HepG2 (cell line): ENCODE measurements at regions of chr14 and their contacts with region 1.

Region 1: GRCh38 chr14:22929104-22929847 is at the start of gene PRMT5:
- DNase-seq: peak; percentile 100
- ATAC-seq: peak; percentile 98
- H3K4me3 ChIP-seq: peak within 1 kb of the TSS; percentile 77 to 98 (median 92)
- H3K27ac ChIP-seq: peak within 1 kb of the TSS; percentile 78
- H3K4me1 ChIP-seq: peaks cover 27% of the 10 kb centered on the region
- H3K27me3 ChIP-seq: no peaks in the 10 kb centered on the region; a peak in 1 of 5 replicates
- CTCF ChIP-seq: peak; percentile 60
- EP300 ChIP-seq: peak; percentile 56 to 82; a peak in 3 of 4 replicates
- POLR2A ChIP-seq: peak; percentile 96 to 98
- RAD21 ChIP-seq: peak; percentile 74
- total RNA-seq, gene PRMT5: 210 and 289 TPM in 2 replicates

Region 2: GRCh38 chr14:22791301-22791700 is 138.0 kb before region 1 on chr14:
- CTCF ChIA-PET with region 1: no interaction called
- POLR2A ChIA-PET with region 1: no interaction called
- in situ Hi-C with region 1: no loop called
- intact Hi-C with region 1: no loop called
- DNase-seq: no peak
- ATAC-seq: peak; percentile 11; the same call in 1 of the 3 replicates
- H3K4me3 ChIP-seq: no peak overlapping the region
- H3K27ac ChIP-seq: no peak overlapping the region
- H3K4me1 ChIP-seq: peaks cover 17% of the 10 kb centered on the region
- H3K27me3 ChIP-seq: no peaks in the 10 kb centered on the region; a peak in 1 of 5 replicates
- CTCF ChIP-seq: no peak
- EP300 ChIP-seq: no peak
- POLR2A ChIP-seq: no peak
- RAD21 ChIP-seq: no peak

Region 3: GRCh38 chr14:22813145-22813544 is 116.1 kb before region 1 on chr14:
- CTCF ChIA-PET with region 1: no interaction called
- POLR2A ChIA-PET with region 1: no interaction called
- in situ Hi-C with region 1: no loop called
- intact Hi-C with region 1: no loop called
- DNase-seq: no peak
- ATAC-seq: peak; percentile 8; the same call in 1 of the 3 replicates
- H3K4me3 ChIP-seq: no peak overlapping the region
- H3K27ac ChIP-seq: no peak overlapping the region
- H3K4me1 ChIP-seq: peaks cover 32% of the 10 kb centered on the region
- H3K27me3 ChIP-seq: no peaks in the 10 kb centered on the region; a peak in 1 of 5 replicates
- CTCF ChIP-seq: no peak
- EP300 ChIP-seq: no peak
- POLR2A ChIP-seq: no peak
- RAD21 ChIP-seq: no peak

Region 4: GRCh38 chr14:22882529-22883172 is 46.6 kb before region 1 on chr14:
- CTCF ChIA-PET with region 1: no interaction called
- POLR2A ChIA-PET with region 1: interaction called, 13 read pairs
- in situ Hi-C with region 1: no loop called
- intact Hi-C with region 1: no loop called
- DNase-seq: no peak
- ATAC-seq: peak; percentile 20
- H3K4me3 ChIP-seq: no peak overlapping the region
- H3K27ac ChIP-seq: no peak overlapping the region
- H3K4me1 ChIP-seq: peaks cover 27% of the 10 kb centered on the region
- H3K27me3 ChIP-seq: peaks cover 8 to 54% of the 10 kb centered on the region in 2 experiments; a peak in 4 of 5 replicates
- CTCF ChIP-seq: no peak
- EP300 ChIP-seq: no peak
- POLR2A ChIP-seq: no peak; a peak in 1 of 4 replicates
- RAD21 ChIP-seq: no peak

Region 5: GRCh38 chr14:22918804-22919600 is 10.3 kb before region 1 on chr14 and contains the start of gene RBM23:
- CTCF ChIA-PET with region 1: interaction called, 3 read pairs
- POLR2A ChIA-PET with region 1: interaction called, 42 read pairs
- in situ Hi-C with region 1: no loop called
- intact Hi-C with region 1: no loop called
- DNase-seq: peak; percentile 36
- ATAC-seq: no peak
- H3K4me3 ChIP-seq: no peak within 1 kb of the TSS
- H3K27ac ChIP-seq: no peak within 1 kb of the TSS
- H3K4me1 ChIP-seq: peaks cover 33% of the 10 kb centered on the region
- H3K27me3 ChIP-seq: no peaks in the 10 kb centered on the region
- CTCF ChIP-seq: no peak
- EP300 ChIP-seq: no peak
- POLR2A ChIP-seq: no peak
- RAD21 ChIP-seq: no peak
- total RNA-seq, gene RBM23: 0.52 and 1.5 TPM in 2 replicates

Region 6: GRCh38 chr14:22945642-22946041 is 16.4 kb after region 1 on chr14:
- CTCF ChIA-PET with region 1: interaction called, 3 read pairs
- POLR2A ChIA-PET with region 1: interaction called, 21 read pairs
- in situ Hi-C with region 1: no loop called
- intact Hi-C with region 1: loop called (anchors 1 kb)
- DNase-seq: no peak
- ATAC-seq: no peak
- H3K4me3 ChIP-seq: no peak overlapping the region
- H3K27ac ChIP-seq: no peak overlapping the region
- H3K4me1 ChIP-seq: no peaks in the 10 kb centered on the region
- H3K27me3 ChIP-seq: no peaks in the 10 kb centered on the region
- CTCF ChIP-seq: no peak
- EP300 ChIP-seq: no peak
- POLR2A ChIP-seq: no peak
- RAD21 ChIP-seq: no peak

Region 7: GRCh38 chr14:22966783-22967269 is 37.5 kb after region 1 on chr14:
- CTCF ChIA-PET with region 1: no interaction called
- POLR2A ChIA-PET with region 1: interaction called, 86 read pairs
- in situ Hi-C with region 1: no loop called
- intact Hi-C with region 1: no loop called
- DNase-seq: no peak
- ATAC-seq: peak; percentile 32
- H3K4me3 ChIP-seq: no peak overlapping the region
- H3K27ac ChIP-seq: peak overlapping the region; percentile 59
- H3K4me1 ChIP-seq: peaks cover 34% of the 10 kb centered on the region
- H3K27me3 ChIP-seq: no peaks in the 10 kb centered on the region
- CTCF ChIP-seq: no peak
- EP300 ChIP-seq: no peak
- POLR2A ChIP-seq: peak in 1 of 2 experiments; percentile 60; a peak in 3 of 4 replicates
- RAD21 ChIP-seq: no peak

Region 8: DNA sequence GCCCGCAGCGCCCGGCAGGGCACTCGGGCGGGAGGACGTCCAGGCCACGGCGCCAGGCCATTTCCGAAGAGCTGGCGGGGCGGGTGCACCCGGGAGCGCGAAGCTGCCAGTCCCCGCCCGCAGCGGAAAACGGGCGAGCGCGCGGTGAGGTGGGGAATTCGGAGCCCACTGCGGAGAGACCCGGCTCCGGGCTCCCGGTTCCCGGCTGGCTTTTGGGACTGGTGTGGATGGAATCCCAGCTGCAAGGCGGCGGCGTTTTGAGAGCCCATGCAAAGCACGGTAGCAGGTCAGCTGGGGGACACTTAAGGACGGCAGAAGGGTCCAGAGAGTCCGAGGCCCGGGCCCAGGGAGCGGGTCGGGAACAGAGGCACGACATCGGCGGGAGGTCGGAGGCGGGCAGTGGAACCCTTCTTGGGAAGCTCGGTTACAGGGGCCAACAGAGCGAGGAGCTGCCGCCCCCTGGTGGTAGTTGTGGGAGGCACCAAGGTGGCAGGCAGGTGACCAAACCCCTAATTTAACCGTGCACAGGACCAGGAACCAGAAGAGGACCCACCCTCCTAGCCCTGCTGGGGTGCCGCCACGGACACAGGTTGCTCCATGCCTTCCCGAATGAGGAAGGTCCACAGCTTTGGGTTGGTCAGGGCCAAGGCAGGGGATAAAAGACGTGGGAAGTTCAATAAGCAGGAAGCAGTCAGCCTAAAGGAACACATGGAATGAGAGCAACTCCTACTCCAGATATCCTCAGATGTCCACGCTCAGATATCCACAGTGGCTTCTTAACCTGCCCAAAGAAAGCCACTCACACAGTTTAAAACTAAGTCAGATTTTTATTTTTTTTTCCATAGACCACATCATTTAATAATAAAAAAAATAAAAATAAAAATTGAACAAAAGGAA is 128.7 kb after region 1 on chr14:
- CTCF ChIA-PET with region 1: interaction called, 5 read pairs
- POLR2A ChIA-PET with region 1: interaction called, 12 read pairs
- in situ Hi-C with region 1: no loop called
- intact Hi-C with region 1: no loop called
- DNase-seq: peak; percentile 92
- ATAC-seq: peak; percentile 71
- H3K4me3 ChIP-seq: peak overlapping the region; percentile 55 to 88 (median 64)
- H3K27ac ChIP-seq: no peak overlapping the region
- H3K4me1 ChIP-seq: peaks cover 29% of the 10 kb centered on the region
- H3K27me3 ChIP-seq: peaks cover 0 to 6% of the 10 kb centered on the region in 2 experiments; a peak in 1 of 5 replicates
- CTCF ChIP-seq: peak; percentile 100
- EP300 ChIP-seq: peak in 1 of 2 experiments; percentile 66; a peak in 1 of 4 replicates
- POLR2A ChIP-seq: peak in 1 of 2 experiments; percentile 39; a peak in 1 of 4 replicates
- RAD21 ChIP-seq: peak; percentile 98

Region 9: GRCh38 chr14:23079716-23080115 is 150.4 kb after region 1 on chr14:
- CTCF ChIA-PET with region 1: no interaction called
- POLR2A ChIA-PET with region 1: no interaction called
- in situ Hi-C with region 1: no loop called
- intact Hi-C with region 1: no loop called
- DNase-seq: no peak
- ATAC-seq: no peak
- H3K4me3 ChIP-seq: no peak overlapping the region
- H3K27ac ChIP-seq: no peak overlapping the region
- H3K4me1 ChIP-seq: no peaks in the 10 kb centered on the region
- H3K27me3 ChIP-seq: no peaks in the 10 kb centered on the region
- CTCF ChIP-seq: no peak
- EP300 ChIP-seq: no peak
- POLR2A ChIP-seq: no peak
- RAD21 ChIP-seq: no peak